RWPE1 (cell line): ENCODE measurements at regions of chr19 and their contacts with region 1.

Region 1: DNA sequence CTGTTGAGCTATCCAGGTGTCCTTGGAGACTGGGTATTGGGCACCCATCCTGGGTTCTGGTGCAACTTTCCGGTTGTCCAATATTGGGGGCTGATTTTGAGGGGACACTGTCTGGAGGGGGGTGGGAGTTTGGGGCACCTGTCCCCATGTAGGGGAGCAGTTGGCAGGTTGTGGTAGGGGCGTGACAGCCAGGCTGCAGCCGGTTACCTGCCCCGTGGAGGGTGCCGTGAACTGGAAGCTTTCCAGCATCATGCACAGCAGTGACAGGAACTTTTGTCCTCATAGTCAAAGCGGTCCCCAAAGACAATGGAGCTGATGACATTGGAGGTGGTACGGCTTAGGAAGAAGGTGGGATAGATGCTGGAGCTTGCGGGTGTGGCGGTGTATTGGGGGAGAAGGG is 34.3 kb downstream of the CYP2B6 start:
- DNase-seq: no peak
- H3K27ac ChIP-seq: no peak overlapping the region
- CTCF ChIP-seq: no peak

Region 2: GRCh38 chr19:41050434-41050833 is 25.0 kb after region 1 on chr19:
- CTCF ChIA-PET with region 1: no interaction called
- POLR2A ChIA-PET with region 1: interaction called, 12 read pairs
- DNase-seq: no peak
- H3K27ac ChIP-seq: no peak overlapping the region
- CTCF ChIP-seq: no peak